Endothelial cell of umbilical vein (primary cell): ENCODE measurements at regions of chr4 and their contacts with region 1.

Region 1: DNA sequence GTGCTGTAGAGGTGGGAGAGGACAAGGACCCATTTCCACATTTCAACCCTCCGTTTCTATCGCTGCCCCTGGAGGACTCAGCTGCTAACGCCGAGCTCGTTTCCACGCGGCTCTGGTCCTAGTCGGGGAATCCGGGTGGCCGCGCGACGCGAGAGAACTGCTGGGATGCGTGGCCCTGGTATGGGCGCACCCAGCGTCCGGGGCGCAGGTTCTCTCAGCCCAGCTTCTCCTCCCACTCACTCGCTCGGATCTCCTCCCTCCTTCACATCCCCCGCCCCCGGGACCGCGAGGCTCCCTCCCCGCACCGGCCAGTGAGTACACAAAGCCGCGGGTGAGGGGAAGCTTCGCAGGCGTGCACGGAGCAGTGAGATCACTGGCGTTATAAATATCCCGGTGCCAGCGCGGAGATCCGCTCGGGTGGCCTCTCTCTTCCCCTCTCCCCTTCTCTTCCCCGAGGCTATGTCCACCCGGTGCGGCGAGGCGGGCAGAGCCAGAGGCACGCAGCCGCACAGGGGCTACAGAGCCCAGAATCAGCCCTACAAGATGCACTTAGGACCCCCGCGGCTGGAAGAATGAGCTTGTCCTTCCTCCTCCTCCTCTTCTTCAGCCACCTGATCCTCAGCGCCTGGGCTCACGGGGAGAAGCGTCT is at the start of gene FGF5:
- DNase-seq: peak; percentile 38
- H3K4me3 ChIP-seq: peak within 1 kb of the TSS; percentile 30 to 76 (median 64)
- H3K27ac ChIP-seq: peak within 1 kb of the TSS; percentile 49
- H3K4me1 ChIP-seq: peaks cover 12% of the 10 kb centered on the region
- H3K27me3 ChIP-seq: peaks cover 77 to 91% of the 10 kb centered on the region in 2 experiments
- CTCF ChIP-seq: no peak
- POLR2A ChIP-seq: no peak
- total RNA-seq, gene FGF5: 0.13 and 1.7 TPM in 2 replicates

Region 2: DNA sequence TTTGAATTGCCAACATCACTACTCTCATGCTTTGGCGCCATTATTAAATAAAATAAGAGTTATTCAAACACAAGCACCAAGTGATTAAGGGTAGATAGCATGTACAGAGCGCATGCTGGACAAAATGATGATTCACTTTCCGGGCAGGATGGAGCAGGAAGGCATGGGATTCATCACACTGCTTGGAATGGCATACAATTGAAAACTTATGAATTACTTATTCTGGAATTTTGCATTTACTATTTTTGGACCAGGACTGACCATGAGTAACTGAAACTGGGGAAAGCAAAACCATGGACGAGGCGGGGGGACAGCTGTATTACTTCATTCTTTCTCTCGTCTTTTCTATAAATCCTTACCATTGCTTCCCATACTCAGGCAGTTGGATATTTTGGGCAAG is 28.4 kb before region 1 on chr4:
- CTCF ChIA-PET with region 1: interaction called, 8 read pairs
- POLR2A ChIA-PET with region 1: no interaction called
- dilution Hi-C with region 1: no loop called
- intact Hi-C with region 1: loop called (anchors 1 kb)
- DNase-seq: peak; percentile 77
- H3K4me3 ChIP-seq: no peak overlapping the region
- H3K27ac ChIP-seq: peak overlapping the region; percentile 88
- H3K4me1 ChIP-seq: peaks cover 43% of the 10 kb centered on the region
- H3K27me3 ChIP-seq: no peaks in the 10 kb centered on the region
- CTCF ChIP-seq: no peak
- POLR2A ChIP-seq: no peak

Region 3: DNA sequence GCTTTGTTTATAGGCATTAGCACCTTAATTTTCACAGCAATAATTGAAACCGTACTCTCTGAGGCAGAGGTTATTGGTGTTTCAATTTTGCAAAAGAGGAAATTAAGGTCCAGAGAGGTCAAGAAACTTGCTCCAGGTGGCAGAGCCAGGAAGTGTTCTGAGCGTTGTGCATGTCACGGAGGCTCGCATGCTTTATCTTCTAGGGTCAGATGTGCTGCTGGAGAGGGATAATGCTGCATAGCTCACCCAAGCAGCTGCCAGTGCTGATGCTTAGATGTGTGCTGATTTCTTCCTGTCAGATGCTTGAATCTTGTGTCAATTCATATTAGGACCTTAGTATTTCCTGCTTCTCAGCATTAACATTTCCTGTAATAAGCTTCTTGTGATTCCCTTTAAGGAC is 12.9 kb before region 1 on chr4:
- CTCF ChIA-PET with region 1: interaction called, 7 read pairs
- POLR2A ChIA-PET with region 1: interaction called, 3 read pairs
- dilution Hi-C with region 1: no loop called
- intact Hi-C with region 1: loop called (anchors 1 kb)
- DNase-seq: no peak
- H3K4me3 ChIP-seq: no peak overlapping the region
- H3K27ac ChIP-seq: no peak overlapping the region
- H3K4me1 ChIP-seq: peaks cover 5% of the 10 kb centered on the region
- H3K27me3 ChIP-seq: peaks cover 10 to 30% of the 10 kb centered on the region in 2 experiments
- CTCF ChIP-seq: no peak
- POLR2A ChIP-seq: no peak

Region 4: DNA sequence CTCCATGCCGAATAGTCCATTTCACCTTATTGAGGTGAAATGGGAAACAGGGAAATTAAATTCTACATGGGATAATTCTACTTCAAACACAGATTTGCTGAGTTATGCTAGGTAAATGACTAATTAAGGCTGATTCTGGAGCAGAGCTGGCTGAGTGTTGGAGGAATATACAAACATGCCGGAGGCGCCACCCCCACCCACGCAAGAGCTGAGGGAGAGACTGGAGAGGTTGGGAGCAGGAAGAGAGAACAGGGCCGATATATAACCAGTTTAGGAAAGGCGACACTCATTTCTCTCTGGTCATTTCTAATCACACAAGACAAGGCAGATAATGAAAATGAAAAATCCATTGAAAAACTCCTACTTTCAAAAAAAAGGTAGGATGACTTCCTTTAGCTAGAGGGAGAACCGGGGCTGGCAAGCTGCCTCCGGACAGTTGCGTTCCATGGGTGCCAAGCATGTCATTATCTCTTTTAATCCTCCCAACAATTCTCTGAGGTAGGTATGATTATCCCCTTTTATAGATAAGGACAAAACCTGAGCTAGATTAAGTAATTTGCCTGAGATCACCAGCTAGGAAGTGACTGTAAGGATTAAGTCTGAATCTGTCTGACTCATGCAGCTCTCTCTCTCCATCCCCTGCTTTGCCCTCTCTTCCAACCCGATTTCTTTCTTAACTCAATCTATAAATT is 41.5 kb after region 1 on chr4:
- CTCF ChIA-PET with region 1: interaction called, 12 read pairs
- POLR2A ChIA-PET with region 1: interaction called, 6 read pairs
- dilution Hi-C with region 1: no loop called
- intact Hi-C with region 1: loop called (anchors 2 kb)
- DNase-seq: no peak
- H3K4me3 ChIP-seq: no peak overlapping the region
- H3K27ac ChIP-seq: no peak overlapping the region
- H3K4me1 ChIP-seq: peaks cover 14% of the 10 kb centered on the region
- H3K27me3 ChIP-seq: no peaks in the 10 kb centered on the region
- CTCF ChIP-seq: no peak
- POLR2A ChIP-seq: no peak

Region 5: GRCh38 chr4:80322716-80323115 is 56.3 kb after region 1 on chr4:
- CTCF ChIA-PET with region 1: interaction called, 9 read pairs
- POLR2A ChIA-PET with region 1: no interaction called
- dilution Hi-C with region 1: no loop called
- intact Hi-C with region 1: loop called (anchors 5 kb)
- DNase-seq: peak; percentile 24
- H3K4me3 ChIP-seq: no peak overlapping the region
- H3K27ac ChIP-seq: no peak overlapping the region
- H3K4me1 ChIP-seq: no peaks in the 10 kb centered on the region
- H3K27me3 ChIP-seq: no peaks in the 10 kb centered on the region
- CTCF ChIP-seq: no peak
- POLR2A ChIP-seq: no peak

Region 6: GRCh38 chr4:80335554-80336358 is 69.4 kb after region 1 on chr4 and contains the start of gene CFAP299:
- CTCF ChIA-PET with region 1: interaction called, 9 read pairs
- POLR2A ChIA-PET with region 1: no interaction called
- dilution Hi-C with region 1: no loop called
- intact Hi-C with region 1: loop called (anchors 1 kb)
- DNase-seq: peak; percentile 68
- H3K4me3 ChIP-seq: peak within 1 kb of the TSS; percentile 37 to 67 (median 46)
- H3K27ac ChIP-seq: no peak within 1 kb of the TSS
- H3K4me1 ChIP-seq: peaks cover 6% of the 10 kb centered on the region
- H3K27me3 ChIP-seq: peaks cover 18 to 63% of the 10 kb centered on the region in 2 experiments
- CTCF ChIP-seq: peak; percentile 54 to 67
- POLR2A ChIP-seq: no peak
- total RNA-seq, gene CFAP299: not detected in 2 replicates

Region 7: GRCh38 chr4:80592950-80593349 is 326.6 kb after region 1 on chr4:
- CTCF ChIA-PET with region 1: no interaction called
- POLR2A ChIA-PET with region 1: no interaction called
- dilution Hi-C with region 1: no loop called
- intact Hi-C with region 1: no loop called
- DNase-seq: no peak
- H3K4me3 ChIP-seq: no peak overlapping the region
- H3K27ac ChIP-seq: no peak overlapping the region
- H3K4me1 ChIP-seq: no peaks in the 10 kb centered on the region
- H3K27me3 ChIP-seq: no peaks in the 10 kb centered on the region
- CTCF ChIP-seq: no peak
- POLR2A ChIP-seq: no peak